ENCODE measurements at regions of chr10 and their contacts with region 1.

Region 1: GRCh38 chr10:97445722-97446639 is at the starts of genes EXOSC1 and ZDHHC16:
- DNase-seq: peak; percentile 94
- ATAC-seq: peak; percentile 98
- H3K4me3 ChIP-seq: peak within 1 kb of the TSS; percentile 81
- H3K27ac ChIP-seq: peak within 1 kb of the TSS; percentile 49
- H3K4me1 ChIP-seq: peaks cover 46% of the 10 kb centered on the region
- H3K27me3 ChIP-seq: no peaks in the 10 kb centered on the region
- CTCF ChIP-seq: no peak
- total RNA-seq, gene EXOSC1: 27.0 TPM
- total RNA-seq, gene ZDHHC16: 63.2 TPM

Region 2: GRCh38 chr10:97425964-97426775 is 19.8 kb before region 1 on chr10 and contains the start of gene PGAM1:
- intact Hi-C with region 1: loop called (anchors 2 kb)
- DNase-seq: peak; percentile 98
- ATAC-seq: peak; percentile 95
- H3K4me3 ChIP-seq: peak within 1 kb of the TSS; percentile 92
- H3K27ac ChIP-seq: peak within 1 kb of the TSS; percentile 89
- H3K4me1 ChIP-seq: peaks cover 28% of the 10 kb centered on the region
- H3K27me3 ChIP-seq: no peaks in the 10 kb centered on the region
- CTCF ChIP-seq: peak; percentile 49
- total RNA-seq, gene PGAM1: 139 TPM

Measured in upper lobe of right lung (tissue), 1 donor.